ENCODE measurements at regions of chr2 and their contacts with region 1.

Region 1: DNA sequence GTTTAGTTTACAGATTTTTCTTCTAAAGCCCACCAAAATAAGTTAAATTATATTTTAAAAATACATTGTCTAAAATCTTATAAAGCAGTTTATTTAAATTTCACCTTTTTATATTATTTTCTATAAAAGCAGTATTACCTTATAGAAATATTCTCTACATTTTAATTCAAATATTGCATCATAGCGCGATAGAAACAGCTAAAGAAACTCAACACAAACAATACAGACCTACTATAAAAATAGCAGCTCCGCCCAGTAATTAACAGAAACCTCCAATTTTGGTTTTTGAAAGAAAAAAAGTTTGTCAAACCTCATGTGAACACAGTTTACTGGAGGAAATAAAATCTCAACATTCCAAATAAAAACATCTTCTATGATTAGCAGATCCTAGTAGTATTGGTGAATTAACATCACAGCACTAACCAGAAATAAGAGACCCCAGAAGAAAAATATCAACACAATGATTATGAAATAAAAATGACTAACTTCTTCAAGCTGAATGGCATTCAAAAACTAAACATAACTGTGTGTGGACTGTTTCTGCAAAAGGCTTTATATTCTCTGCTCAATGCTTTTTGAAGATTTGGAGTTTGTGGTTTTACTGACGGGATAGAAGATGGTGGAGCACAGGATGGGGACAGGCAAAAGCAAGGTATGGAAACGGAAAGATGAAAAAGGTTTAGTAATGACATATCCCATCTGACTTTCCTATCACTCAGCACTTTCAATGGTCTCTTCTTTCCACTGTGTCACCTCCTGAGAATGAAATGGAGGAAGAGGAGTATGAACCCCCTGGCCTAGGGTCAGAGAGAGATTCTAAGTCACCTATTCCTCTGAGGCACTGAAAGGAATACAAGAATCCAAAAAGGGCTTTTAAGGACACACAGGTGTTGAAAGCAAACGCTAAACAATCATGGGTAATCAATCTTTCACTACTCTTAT is 17.5 kb downstream of the MAP4K3 start:
- DNase-seq: no peak

Region 2: DNA sequence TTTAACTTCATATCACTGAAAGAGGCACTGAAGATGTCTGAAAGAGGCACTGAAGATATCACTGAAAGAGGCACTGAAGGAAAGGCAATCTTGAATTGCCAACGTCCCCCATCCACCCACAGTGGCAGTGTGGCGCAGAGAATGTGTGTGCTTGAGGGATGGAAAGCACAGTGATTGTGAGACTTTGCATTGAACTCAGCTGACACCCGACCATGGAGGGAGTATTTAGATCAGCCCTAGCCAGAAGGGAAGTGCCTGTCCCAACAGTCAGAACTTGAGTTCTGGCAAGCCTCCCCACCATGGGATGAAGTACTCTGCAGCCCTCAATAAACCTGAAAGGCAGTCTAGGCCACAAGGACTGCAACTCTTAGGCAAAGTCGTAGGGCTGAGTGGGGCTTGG is 16.2 kb before region 1 on chr2:
- intact Hi-C with region 1: loop called in 1 of 2 experiments (anchors 2 kb)
- DNase-seq: no peak